Calu3 (cell line): ENCODE measurements at regions of chr12 and their contacts with region 1.

Region 1: GRCh38 chr12:122584177-122584780 is 57.2 kb downstream of the KNTC1 start:
- DNase-seq: no peak
- H3K4me3 Mint-ChIP-seq: no peak overlapping the region
- H3K27ac Mint-ChIP-seq: no peak overlapping the region
- H3K4me1 Mint-ChIP-seq: no peaks in the 10 kb centered on the region
- H3K27me3 Mint-ChIP-seq: no peaks in the 10 kb centered on the region
- CTCF ChIP-seq: no peak

Region 2: DNA sequence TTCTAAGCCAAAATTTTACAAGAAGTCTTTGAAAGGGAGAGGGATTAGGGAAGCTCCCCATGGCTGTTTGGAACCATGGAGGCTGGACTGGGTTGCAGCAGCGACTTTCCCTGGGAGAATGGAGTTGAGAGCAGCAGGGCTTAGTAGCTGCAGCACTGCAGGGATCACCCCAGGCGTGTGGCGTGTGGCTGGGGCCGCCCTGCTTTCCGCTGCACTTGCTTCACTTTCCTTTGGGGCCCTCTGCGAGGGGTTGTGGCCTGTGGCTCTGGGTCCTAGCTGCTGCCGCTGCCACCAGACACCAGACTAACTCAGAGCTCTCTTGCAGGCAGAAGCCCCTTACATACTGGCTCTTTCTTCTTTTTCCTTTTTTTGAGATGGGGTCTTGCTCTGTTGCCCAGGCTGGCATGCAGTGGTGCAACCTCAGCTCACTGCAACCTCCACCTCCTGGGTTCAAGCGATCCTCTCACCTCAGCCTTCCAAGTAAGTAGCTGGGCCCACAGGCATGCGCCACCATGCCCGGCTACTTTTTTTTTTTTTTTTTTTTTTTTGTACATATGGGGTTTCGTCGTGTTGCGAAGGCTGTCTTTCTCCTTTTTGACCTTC is 215.5 kb after region 1 on chr12:
- CTCF ChIA-PET with region 1: interaction called, 10 read pairs
- intact Hi-C with region 1: no loop called
- DNase-seq: no peak
- H3K4me3 Mint-ChIP-seq: no peak overlapping the region
- H3K27ac Mint-ChIP-seq: no peak overlapping the region
- H3K4me1 Mint-ChIP-seq: no peaks in the 10 kb centered on the region
- H3K27me3 Mint-ChIP-seq: no peaks in the 10 kb centered on the region
- CTCF ChIP-seq: no peak

Region 3: DNA sequence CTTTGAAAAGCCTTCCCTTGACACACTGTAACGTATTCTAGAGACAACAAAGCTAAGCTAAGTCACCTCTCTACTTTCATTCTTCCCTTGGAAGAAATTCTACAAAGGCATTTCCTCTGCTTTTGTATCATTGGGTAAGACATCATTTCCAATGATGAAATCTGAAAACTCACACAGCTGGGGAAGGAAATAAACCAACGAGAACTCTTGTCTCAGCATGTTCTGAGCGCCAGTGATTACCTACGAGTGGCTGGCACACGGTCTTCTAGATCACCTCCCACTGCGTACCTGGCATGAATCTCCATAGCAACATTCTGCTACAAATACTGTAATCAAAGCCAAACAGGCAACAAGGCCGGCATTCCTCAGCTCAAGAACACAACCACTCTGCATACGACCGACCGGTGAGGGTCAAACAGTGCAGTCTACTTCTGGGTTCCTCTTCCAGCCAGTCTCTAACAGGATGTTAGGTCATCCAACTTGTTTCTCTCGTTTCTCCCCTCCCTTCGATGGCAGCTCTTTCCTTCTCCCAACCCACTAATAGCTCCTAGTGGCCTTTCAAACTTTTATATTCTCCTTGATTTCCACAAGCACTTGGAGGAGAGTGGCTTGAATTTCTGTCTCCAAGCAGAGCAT is 304.1 kb after region 1 on chr12:
- CTCF ChIA-PET with region 1: no interaction called
- intact Hi-C with region 1: no loop called
- DNase-seq: peak; percentile 91
- H3K4me3 Mint-ChIP-seq: peak overlapping the region; percentile 100
- H3K27ac Mint-ChIP-seq: peak overlapping the region; percentile 98
- H3K4me1 Mint-ChIP-seq: peaks cover 81% of the 10 kb centered on the region
- H3K27me3 Mint-ChIP-seq: no peaks in the 10 kb centered on the region
- CTCF ChIP-seq: no peak